Endothelial cell of umbilical vein (primary cell): ENCODE measurements at regions of chr3 and their contacts with region 1.

Region 1: DNA sequence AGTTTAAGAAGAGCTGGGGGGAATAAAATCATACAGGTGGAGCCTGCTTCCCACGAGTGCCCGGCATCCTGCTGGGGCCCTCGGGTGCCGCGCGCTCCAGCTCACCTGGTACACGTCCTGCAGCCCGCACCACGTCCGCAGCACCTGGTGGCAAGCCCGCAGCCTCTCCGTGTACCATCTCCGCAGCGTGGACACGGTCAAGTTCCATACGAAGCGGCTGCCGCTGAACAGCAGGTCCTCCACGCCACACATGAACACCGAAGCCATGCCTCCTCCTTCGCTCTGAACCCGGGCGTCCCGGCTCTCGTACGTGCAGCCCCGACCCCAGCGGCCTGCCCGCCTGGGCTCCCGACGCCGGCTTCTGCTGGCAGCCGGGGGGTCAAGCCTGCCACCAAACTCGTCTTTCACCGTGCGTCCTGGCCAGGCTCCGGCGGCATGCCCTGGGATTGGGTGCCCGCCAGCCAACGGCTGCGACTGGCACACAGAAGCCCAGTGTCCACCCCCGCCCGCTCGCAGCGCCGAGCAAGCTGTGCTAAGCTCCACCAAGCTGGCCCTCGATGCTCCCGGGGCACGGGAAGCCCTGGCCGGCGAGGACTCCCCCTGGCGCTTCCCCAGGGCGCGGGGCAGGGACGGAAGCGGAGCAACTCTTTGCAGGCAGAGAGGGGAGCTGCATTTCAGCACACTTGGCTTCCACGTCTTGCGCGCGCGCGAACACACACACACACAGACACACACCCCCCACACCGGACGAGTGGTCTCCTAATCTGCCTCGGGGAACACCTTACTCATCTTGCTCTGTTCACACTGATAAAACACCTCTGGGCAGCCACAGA is at the start of gene FRMD4B:
- DNase-seq: peak; percentile 74
- H3K4me3 ChIP-seq: peak within 1 kb of the TSS; percentile 18 to 50 (median 33)
- H3K27ac ChIP-seq: no peak within 1 kb of the TSS
- H3K4me1 ChIP-seq: peaks cover 17% of the 10 kb centered on the region
- H3K27me3 ChIP-seq: no peaks in the 10 kb centered on the region
- CTCF ChIP-seq: peak; percentile 38 to 50
- POLR2A ChIP-seq: no peak
- total RNA-seq, gene FRMD4B: 77.7 and 89.7 TPM in 2 replicates

Region 2: DNA sequence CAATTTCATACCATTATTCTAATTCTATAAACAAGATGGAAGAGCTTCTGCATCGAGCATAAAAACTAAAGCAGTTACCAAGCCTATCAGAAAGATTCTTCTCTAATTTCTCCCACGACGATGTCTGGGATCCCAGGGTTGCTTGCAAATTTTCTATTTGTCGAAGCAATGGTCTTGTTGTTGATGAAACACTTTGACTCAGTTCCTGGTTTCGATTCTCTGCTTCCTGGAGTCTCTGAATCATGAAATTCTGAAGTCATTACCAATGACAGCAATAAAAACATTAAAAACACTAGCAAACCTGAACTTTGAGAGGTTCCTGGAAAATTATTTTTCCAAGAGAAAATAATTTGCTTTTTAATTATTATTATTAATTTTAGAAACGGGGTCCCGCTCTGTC is 352.5 kb before region 1 on chr3:
- CTCF ChIA-PET with region 1: no interaction called
- POLR2A ChIA-PET with region 1: no interaction called
- dilution Hi-C with region 1: no loop called
- intact Hi-C with region 1: no loop called
- DNase-seq: peak; percentile 94
- H3K4me3 ChIP-seq: peak overlapping the region in 1 of 3 experiments; percentile 33
- H3K27ac ChIP-seq: peak overlapping the region; percentile 96
- H3K4me1 ChIP-seq: peaks cover 25% of the 10 kb centered on the region
- H3K27me3 ChIP-seq: no peaks in the 10 kb centered on the region
- CTCF ChIP-seq: no peak
- POLR2A ChIP-seq: no peak

Region 3: DNA sequence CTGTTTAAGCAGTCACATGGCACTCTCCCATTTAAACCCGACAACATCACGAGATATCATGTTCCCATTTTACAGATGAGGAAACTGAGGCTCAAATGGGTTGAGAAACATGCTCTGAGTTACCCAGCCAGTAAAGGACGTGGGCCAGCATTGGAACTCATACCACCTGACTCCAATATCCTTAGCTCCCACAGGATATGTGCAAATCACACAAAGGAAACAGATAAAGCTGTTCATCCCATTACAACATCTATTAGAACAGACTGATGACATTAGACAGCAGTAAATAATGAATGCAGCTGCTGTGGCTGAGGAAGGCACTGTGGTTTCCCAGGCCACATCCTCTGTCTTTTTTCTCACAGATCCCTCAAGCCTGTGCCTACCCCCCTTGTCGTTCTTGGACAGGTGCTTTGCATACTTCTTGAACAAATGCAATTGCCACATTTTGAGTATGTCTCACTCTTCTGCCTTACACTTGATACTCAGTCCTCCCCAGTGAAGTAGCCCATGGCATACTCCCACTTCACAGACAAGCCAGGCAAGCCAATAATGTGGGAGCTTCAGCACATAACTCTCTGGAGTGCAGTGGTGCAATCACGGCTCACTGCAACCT is 17.7 kb before region 1 on chr3:
- CTCF ChIA-PET with region 1: interaction called, 26 read pairs
- POLR2A ChIA-PET with region 1: no interaction called
- dilution Hi-C with region 1: no loop called
- intact Hi-C with region 1: no loop called
- DNase-seq: peak; percentile 25
- H3K4me3 ChIP-seq: no peak overlapping the region
- H3K27ac ChIP-seq: no peak overlapping the region
- H3K4me1 ChIP-seq: peaks cover 31% of the 10 kb centered on the region
- H3K27me3 ChIP-seq: no peaks in the 10 kb centered on the region
- CTCF ChIP-seq: no peak
- POLR2A ChIP-seq: no peak

Region 4: DNA sequence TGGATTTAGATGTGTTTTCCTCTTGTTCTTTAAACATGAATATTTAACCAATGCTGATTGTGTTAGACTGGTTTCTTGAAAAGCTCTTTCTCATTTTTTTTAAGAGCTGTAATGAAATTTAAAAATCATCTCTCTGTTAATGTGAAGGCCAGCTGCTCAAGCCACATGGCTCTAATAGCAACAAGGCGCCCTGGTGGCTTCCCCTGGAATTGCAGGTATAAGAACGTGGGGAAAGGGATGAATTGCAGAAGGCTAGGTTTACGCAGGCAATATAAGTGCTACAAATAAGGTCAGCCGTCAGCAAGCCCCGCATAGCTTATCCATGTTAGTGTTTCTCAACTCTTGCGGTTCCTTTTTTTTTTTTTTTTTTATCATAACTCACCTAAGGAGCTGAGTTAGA is 722.1 kb after region 1 on chr3:
- CTCF ChIA-PET with region 1: no interaction called
- POLR2A ChIA-PET with region 1: no interaction called
- dilution Hi-C with region 1: no loop called
- intact Hi-C with region 1: no loop called
- DNase-seq: no peak
- H3K4me3 ChIP-seq: no peak overlapping the region
- H3K27ac ChIP-seq: no peak overlapping the region
- H3K4me1 ChIP-seq: peaks cover 11% of the 10 kb centered on the region
- H3K27me3 ChIP-seq: no peaks in the 10 kb centered on the region
- CTCF ChIP-seq: peak; percentile 45 to 49
- POLR2A ChIP-seq: no peak